ENCODE measurements at regions of chr1 and their contacts with region 1.

Region 1: DNA sequence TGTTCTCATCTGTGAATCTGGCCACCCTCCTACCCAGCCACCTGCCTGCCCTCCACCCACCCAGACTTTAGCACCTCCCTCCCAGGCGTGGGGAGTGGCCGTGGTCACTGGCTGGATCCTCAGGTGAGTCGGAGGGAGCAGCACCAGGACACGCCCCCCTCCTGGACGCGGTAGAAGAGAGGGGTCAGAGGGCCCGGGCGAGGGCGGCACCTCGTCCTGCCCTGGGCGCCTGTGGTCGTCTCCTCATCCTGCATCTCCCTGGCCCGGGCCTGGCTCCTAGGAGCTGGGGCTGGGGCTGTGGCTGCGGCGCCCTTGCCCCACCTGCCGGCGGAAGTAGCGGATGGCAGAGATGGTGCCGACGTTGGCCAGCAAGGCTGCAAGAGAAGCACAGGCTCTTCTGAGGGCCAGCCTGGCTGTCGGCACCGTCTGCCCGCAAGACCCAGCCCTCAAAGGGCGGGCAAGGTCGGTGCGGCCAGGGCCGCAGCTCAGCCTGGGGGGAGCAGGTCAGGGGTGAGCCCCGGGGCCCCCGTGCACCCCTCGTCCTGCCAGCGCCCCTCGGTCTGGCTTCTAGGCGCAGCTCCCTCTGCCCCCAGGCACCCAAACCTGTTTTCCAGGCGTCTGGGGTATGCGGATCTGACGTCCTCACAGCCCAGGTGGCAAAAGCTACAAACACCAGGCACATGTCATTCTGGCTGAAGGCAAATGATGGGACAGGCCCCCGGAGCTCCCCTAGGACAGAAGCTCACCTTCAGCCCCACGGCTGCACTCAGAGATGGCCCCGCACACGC is 5.8 kb downstream of the PERM1 start:
- DNase-seq: peak; percentile 74 to 85
- H3K4me3 ChIP-seq: peak overlapping the region; percentile 38 to 50 (median 41)
- H3K27ac ChIP-seq: peak overlapping the region in 3 of 5 donors; percentile 35 to 62 (median 59)
- H3K4me1 ChIP-seq: peaks cover 7 to 15% (median 12%) of the 10 kb centered on the region in 4 donors
- H3K27me3 ChIP-seq: peaks cover 11 to 72% (median 28%) of the 10 kb centered on the region in 3 donors
- CTCF ChIP-seq: peak in 5 of 7 experiments; percentile 49 to 74 (median 53)
- EP300 ChIP-seq: no peak
- POLR2A ChIP-seq: no peak

Region 2: DNA sequence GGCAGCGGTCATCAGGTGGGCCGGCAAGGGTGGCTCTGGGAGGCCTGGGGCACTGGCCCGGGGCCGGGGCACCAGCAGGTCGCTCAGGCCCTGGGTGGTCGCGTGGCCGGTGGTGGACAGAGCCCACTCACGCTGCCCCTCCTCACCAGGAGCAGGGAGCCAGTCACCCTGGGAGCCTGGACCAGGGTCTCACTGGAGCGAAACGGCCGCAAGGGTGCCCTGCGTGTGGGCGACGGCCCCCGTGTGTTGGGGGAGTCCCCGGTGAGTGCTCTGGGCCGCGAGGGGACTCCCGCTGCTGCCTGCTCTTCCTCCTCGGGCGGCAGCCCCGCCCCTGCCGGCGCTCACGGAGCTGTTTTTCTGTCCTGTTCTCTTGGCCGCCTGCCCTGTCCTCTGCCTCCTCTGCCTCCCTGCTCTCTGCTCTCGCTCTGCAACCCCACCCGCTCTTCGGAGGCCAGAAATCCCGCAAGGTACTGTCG is 74.5 kb after region 1 on chr1:
- intact Hi-C with region 1: loop called (anchors 5 kb)
- DNase-seq: peak in 1 of 2 donors; percentile 53
- H3K4me3 ChIP-seq: no peak overlapping the region
- H3K27ac ChIP-seq: no peak overlapping the region
- H3K4me1 ChIP-seq: no peaks in the 10 kb centered on the region
- H3K27me3 ChIP-seq: no peaks in the 10 kb centered on the region
- CTCF ChIP-seq: no peak
- EP300 ChIP-seq: no peak
- POLR2A ChIP-seq: no peak

Region 3: DNA sequence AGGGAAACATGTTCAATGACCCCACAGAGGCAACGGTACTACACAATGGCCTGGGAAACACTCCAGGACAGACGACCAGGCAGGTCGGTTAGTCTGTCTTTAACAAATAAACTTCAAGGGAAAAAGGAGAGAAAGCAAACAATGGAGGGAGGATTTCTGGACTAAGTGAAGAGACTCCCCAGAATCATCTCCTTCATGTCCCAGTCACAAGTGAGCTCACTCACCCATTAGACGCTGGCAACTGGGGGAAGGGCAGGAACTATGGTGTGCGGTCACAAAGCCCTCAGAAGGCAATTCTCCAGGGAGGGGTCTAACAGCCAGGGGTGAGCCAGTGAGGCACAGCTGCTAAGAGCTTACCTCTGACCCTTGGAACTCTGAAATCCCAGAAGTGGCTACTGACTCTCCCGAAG is 857.8 kb after region 1 on chr1:
- intact Hi-C with region 1: no loop called
- DNase-seq: no peak
- H3K4me3 ChIP-seq: no peak overlapping the region
- H3K27ac ChIP-seq: no peak overlapping the region
- H3K4me1 ChIP-seq: peaks cover 11 to 38% (median 19%) of the 10 kb centered on the region in 4 donors
- H3K27me3 ChIP-seq: no peaks in the 10 kb centered on the region
- CTCF ChIP-seq: no peak
- EP300 ChIP-seq: no peak
- POLR2A ChIP-seq: no peak